ENCODE measurements at regions of chr17 and their contacts with region 1.

Region 1: GRCh38 chr17:38667099-38667786 is 7.5 kb downstream of the EPOP start:
- DNase-seq: peak; percentile 51 to 78
- H3K4me3 ChIP-seq: no peak overlapping the region
- H3K27ac ChIP-seq: no peak overlapping the region
- H3K4me1 ChIP-seq: peaks cover 4 to 28% (median 16%) of the 10 kb centered on the region in 4 experiments; a peak in 6 of 7 replicates
- H3K27me3 ChIP-seq: peaks cover 26 to 49% (median 46%) of the 10 kb centered on the region in 4 experiments
- CTCF ChIP-seq: peak; percentile 98 to 100 (median 99)
- EP300 ChIP-seq: no peak
- POLR2A ChIP-seq: no peak
- RAD21 ChIP-seq: peak; percentile 100

Region 2: DNA sequence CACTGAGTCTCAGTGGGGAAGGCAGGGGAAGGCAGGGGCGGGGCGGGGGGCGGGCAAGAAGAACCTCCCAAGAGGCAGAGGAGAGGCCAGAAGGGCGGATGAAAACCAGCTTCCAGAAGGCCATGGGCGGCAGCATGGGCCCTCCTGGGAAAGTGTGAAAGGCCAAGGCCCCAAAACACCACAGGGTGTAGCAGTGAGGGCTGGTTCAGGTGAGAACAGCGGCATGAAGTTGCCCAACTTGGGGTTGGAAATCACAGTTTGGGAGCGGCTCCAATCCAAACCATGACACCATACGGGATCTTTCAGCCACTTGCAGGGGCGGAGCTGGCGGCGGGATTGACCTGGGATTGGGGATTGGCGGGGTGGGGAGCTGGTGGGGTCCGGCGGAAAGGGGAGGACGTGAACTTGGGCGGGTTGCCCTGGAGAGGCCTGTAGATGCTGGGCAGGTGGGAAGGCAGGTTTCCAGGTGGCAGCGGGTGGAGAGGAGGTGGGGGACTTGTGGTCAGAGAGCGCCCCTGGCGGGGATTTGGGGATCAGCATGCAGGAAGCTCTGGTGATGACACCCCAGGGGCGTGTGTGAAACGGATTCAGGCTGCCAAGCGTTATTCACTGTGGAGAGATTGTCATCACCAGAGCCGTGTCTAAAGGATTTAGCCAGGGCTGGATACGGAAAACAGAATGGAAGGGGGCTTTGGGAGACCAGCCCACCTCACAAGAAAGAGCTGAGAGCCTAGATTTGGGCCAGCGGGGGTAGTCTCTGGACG is 158.1 kb before region 1 on chr17:
- CTCF ChIA-PET with region 1: interaction called, 181 read pairs
- POLR2A ChIA-PET with region 1: interaction called, 4 read pairs
- DNase-seq: peak; percentile 93 to 96
- H3K4me3 ChIP-seq: peak overlapping the region in 3 of 4 experiments; percentile 30 to 56 (median 47); a peak in 7 of 8 replicates
- H3K27ac ChIP-seq: peak overlapping the region; percentile 37; the same call in 1 of the 2 replicates
- H3K4me1 ChIP-seq: peaks cover 4 to 28% (median 21%) of the 10 kb centered on the region in 4 experiments
- H3K27me3 ChIP-seq: peaks cover 0 to 24% (median 11%) of the 10 kb centered on the region in 4 experiments; a peak in 4 of 7 replicates
- CTCF ChIP-seq: peak; percentile 90 to 96 (median 95)
- EP300 ChIP-seq: 0 out of 3 replicates have a peak, but pooled peaks of 1 of the 2 experiments have one; percentile 19
- POLR2A ChIP-seq: peak; percentile 69 to 76; a peak in 2 of 3 replicates
- RAD21 ChIP-seq: peak; percentile 75 to 80

Region 3: GRCh38 chr17:38557836-38558727 is 109.2 kb before region 1 on chr17:
- CTCF ChIA-PET with region 1: interaction called, 366 read pairs
- POLR2A ChIA-PET with region 1: interaction called, 18 read pairs
- DNase-seq: peak; percentile 93 to 97
- H3K4me3 ChIP-seq: peak overlapping the region; percentile 37 to 69 (median 58); a peak in 7 of 8 replicates
- H3K27ac ChIP-seq: no peak overlapping the region
- H3K4me1 ChIP-seq: peaks cover 4 to 37% (median 27%) of the 10 kb centered on the region in 4 experiments
- H3K27me3 ChIP-seq: peaks cover 34 to 52% (median 48%) of the 10 kb centered on the region in 4 experiments
- CTCF ChIP-seq: peak; percentile 95 to 97 (median 96)
- EP300 ChIP-seq: 0 out of 3 replicates have a peak, but pooled peaks of 1 of the 2 experiments have one; percentile 58
- POLR2A ChIP-seq: no peak
- RAD21 ChIP-seq: peak; percentile 75 to 85

Region 4: GRCh38 chr17:38584350-38584925 is 82.8 kb before region 1 on chr17:
- CTCF ChIA-PET with region 1: interaction called, 281 read pairs
- POLR2A ChIA-PET with region 1: interaction called, 5 read pairs
- DNase-seq: peak in 1 of 2 experiments; percentile 89
- H3K4me3 ChIP-seq: peak overlapping the region in 1 of 4 experiments; percentile 34; a peak in 2 of 8 replicates
- H3K27ac ChIP-seq: no peak overlapping the region
- H3K4me1 ChIP-seq: peaks cover 3 to 45% (median 26%) of the 10 kb centered on the region in 4 experiments
- H3K27me3 ChIP-seq: peaks cover 4 to 18% (median 13%) of the 10 kb centered on the region in 4 experiments
- CTCF ChIP-seq: peak; percentile 88 to 94 (median 92)
- EP300 ChIP-seq: no peak
- POLR2A ChIP-seq: no peak
- RAD21 ChIP-seq: peak; percentile 68 to 78

Region 5: DNA sequence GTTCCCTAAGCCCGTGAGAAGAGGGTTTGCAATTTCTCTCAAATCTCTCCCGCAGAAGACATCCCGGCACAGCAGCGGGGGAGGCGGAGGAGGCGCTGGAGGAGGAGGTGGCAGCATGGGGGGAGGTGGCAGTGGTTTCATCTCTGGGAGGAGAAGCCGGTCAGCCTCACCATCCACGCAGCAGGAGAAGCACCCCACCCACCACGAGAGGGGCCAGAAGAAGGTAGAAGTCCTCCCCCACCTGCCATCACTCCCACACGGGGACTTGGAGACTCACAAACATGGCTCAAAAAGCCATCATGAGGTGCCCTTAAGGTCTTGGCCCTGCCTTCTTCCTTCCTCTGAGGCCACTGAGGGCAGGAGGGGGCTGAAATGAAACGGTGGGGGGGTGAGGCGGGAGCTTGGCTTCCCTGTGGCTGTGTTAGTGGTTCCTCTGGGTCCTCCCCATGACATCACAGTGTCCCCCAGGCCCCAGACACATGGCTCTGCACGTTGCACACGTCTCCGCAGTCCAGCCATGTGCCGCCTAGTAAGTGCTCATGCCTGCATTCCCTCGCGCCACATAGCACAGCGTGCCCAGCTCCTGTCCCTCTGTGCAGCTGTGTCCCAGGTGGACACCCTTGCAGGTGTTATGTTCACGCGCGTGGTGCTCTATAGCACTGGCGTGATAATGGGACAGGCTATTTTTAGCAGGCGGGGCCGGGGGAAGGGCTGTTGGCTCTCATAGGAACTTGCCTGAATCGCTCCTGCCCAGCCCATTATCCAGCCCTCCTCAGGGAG is 44.7 kb after region 1 on chr17:
- CTCF ChIA-PET with region 1: interaction called, 12 read pairs
- POLR2A ChIA-PET with region 1: interaction called, 3 read pairs
- DNase-seq: no peak
- H3K4me3 ChIP-seq: no peak overlapping the region
- H3K27ac ChIP-seq: no peak overlapping the region
- H3K4me1 ChIP-seq: peaks cover 9 to 36% (median 25%) of the 10 kb centered on the region in 4 experiments
- H3K27me3 ChIP-seq: peaks cover 1 to 26% (median 15%) of the 10 kb centered on the region in 4 experiments
- CTCF ChIP-seq: no peak
- EP300 ChIP-seq: no peak
- POLR2A ChIP-seq: no peak
- RAD21 ChIP-seq: no peak